PC-9 (cell line): ENCODE measurements at regions of chr18 and their contacts with region 1.

Region 1: DNA sequence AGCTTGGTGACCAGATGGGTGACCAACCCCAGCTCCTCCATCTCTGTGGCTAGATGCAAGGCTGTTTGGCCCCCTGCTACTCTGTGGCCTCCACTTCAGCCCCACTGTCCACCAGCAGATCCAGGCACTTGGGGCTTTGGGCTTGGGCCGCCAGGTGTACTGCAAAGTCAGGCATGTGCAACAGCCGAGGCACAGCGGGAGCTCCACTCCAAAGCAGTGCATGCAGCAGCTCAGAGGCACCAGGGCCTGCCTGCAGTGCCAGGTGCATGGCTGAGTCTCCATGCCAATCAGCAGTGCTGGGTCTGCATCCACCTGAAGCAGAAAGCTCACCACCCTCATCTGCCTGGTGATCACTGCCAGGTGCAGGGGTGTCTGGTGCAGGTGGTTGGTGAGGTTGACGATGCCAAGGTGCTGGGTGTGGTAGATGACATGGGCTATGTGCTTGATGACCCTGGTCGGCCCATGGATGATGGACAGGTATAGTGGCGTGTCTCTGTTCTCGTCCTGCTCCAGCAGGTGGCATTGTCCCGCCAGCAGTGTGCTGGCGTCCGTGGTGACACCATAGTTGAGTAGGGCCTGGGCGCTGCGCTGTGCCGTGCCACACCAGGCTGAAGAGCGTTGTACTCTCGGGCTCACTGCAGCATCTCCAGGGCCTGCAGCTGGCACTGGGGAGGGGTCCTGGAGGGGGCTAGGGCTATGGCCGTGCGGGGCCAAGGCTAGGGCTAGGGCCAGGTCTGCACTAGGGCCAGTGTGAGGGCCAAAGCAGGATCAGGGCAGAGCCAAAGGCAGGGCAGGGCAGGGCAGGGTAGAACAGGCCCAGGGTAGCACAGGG is 1.0 kb upstream of the ANKRD62 start:
- DNase-seq: peak; percentile 41 to 73
- H3K4me3 ChIP-seq: no peak overlapping the region
- H3K27ac ChIP-seq: no peak overlapping the region
- H3K4me1 ChIP-seq: no peaks in the 10 kb centered on the region
- H3K27me3 ChIP-seq: no peaks in the 10 kb centered on the region
- CTCF ChIP-seq: peak; percentile 79

Region 2: GRCh38 chr18:12236934-12237832 is 144.6 kb after region 1 on chr18:
- CTCF ChIA-PET with region 1: no interaction called
- POLR2A ChIA-PET with region 1: no interaction called
- intact Hi-C with region 1: loop called (anchors 1 kb)
- DNase-seq: peak in 1 of 2 experiments; percentile 65
- H3K4me3 ChIP-seq: no peak overlapping the region
- H3K27ac ChIP-seq: no peak overlapping the region
- H3K4me1 ChIP-seq: peaks cover 15% of the 10 kb centered on the region
- H3K27me3 ChIP-seq: no peaks in the 10 kb centered on the region
- CTCF ChIP-seq: peak; percentile 90

Region 3: DNA sequence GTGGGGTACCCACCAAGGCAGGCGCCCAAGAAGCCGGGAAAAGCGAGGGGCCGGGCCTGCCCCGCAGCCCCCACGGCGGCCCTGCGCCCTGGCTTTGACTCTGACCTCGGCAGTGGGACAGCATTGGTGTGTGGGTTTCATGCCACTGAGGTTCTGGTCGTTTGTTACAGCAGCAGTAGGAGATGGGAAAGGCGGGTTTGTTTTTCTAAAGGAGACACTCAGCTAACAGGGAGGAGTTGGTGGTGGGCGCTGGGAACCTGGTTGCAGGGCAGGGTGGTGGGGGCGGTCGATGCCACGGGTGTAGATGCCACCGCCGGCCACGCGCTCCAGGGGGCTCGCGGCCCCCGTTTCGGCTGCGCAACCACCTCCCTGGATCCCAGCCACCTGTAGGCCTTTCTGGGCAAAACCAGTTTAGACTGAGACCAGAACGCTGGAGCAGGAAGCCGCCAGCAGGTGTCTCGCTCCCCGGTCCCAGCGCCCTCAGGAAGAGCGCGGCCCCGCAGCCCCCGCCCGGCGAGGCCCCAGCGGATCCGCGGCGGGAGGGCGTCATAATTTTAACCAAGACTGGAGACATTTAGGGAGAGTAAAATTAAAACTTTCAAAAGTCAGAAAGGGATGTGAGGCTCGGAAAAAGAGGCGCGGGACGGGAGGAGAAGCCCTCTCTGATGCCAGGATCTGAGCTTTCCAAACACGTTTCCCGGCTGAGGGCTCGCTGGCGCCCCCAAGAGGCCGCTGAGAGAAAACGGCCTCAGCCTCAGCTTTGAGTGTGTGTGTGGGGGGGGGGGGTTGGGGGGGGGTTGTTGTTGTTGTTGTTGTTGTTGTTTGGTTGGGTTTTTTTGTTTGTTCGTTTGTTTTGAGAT is 179.0 kb after region 1 on chr18:
- CTCF ChIA-PET with region 1: interaction called, 3 read pairs
- POLR2A ChIA-PET with region 1: no interaction called
- intact Hi-C with region 1: loop called (anchors 1 kb)
- DNase-seq: peak; percentile 60 to 83
- H3K4me3 ChIP-seq: peak overlapping the region; percentile 70
- H3K27ac ChIP-seq: peak overlapping the region; percentile 57
- H3K4me1 ChIP-seq: no peaks in the 10 kb centered on the region
- H3K27me3 ChIP-seq: no peaks in the 10 kb centered on the region
- CTCF ChIP-seq: peak; percentile 80

Region 4: DNA sequence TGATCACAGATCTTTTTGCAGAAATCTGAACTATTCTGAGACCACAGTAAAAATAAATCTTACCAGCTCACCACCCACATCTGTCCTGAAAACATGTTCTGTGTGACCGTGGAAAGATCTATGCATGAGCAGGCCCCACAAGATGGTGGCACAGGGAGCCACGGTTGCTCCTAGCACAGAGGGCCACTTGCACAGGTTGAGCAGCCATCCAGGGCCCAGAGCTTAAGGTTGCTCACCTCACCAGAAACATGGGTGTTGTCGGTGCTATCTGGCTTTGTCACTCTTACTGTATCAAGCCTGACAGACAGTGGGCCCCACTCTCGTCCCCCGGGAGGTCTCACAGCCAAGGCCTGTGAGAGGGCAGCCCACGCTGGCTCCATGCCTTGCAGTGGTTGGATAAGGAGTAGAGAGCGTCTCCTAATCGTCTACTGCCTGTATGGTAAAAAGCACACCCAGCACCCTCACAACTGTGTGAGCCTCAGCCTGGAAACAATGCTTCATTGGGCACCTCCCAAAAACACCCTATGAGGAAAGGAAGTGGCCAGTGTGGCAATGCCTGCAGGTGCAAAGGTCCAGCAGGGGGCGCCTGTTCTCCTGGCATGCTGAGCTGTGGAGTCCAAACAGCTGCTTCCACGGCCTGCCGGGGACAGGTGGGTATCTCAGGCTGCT is 235.0 kb after region 1 on chr18:
- CTCF ChIA-PET with region 1: no interaction called
- POLR2A ChIA-PET with region 1: interaction called, 5 read pairs
- intact Hi-C with region 1: loop called (anchors 1 kb)
- DNase-seq: peak; percentile 58 to 82
- H3K4me3 ChIP-seq: no peak overlapping the region
- H3K27ac ChIP-seq: no peak overlapping the region
- H3K4me1 ChIP-seq: no peaks in the 10 kb centered on the region
- H3K27me3 ChIP-seq: no peaks in the 10 kb centered on the region
- CTCF ChIP-seq: peak; percentile 91

Region 5: GRCh38 chr18:12336875-12337274 is 244.3 kb after region 1 on chr18:
- CTCF ChIA-PET with region 1: no interaction called
- POLR2A ChIA-PET with region 1: no interaction called
- intact Hi-C with region 1: loop called (anchors 2 kb)
- DNase-seq: peak; percentile 74 to 91
- H3K4me3 ChIP-seq: no peak overlapping the region; the same call in 1 of the 2 replicates
- H3K27ac ChIP-seq: peak overlapping the region; percentile 48
- H3K4me1 ChIP-seq: peaks cover 32% of the 10 kb centered on the region
- H3K27me3 ChIP-seq: no peaks in the 10 kb centered on the region
- CTCF ChIP-seq: no peak

Region 6: DNA sequence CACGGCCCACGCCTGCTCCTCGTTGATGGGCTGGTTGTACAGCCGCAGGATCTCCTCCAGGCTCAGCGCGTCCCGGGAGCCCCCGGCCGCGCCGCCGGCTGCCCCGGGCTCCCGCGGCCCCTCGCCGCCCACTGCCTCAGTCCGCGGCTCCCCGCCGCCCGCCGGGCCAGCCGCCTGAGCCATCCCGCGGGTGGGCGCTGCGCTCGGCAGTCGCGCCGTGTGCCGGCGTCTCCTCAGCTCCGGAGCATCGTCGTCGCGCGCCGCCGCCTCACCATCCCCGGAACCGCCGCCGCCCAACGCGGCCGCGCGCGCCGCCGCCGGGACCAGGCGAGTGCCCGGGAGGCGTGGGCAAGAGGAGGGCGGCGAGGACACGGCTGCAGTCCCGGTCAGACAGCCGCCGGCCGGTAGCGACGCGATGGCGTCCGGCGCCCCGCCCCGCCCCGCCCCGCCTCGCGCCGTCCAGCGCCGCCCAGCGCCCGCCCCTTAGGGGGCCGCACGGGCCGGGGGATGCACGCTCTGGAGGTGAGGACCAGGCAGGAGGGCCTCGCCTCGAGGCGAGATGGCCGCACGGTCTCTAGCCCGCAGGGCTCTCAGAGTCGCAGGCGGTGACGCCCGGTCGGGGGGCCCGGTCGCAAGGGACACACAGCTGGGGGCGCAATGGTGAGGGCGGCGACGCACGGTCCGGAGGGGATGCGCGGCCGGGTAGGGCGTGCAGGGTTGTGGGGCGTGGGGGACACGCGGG is 565.2 kb after region 1 on chr18 and contains the start of gene SPIRE1:
- CTCF ChIA-PET with region 1: no interaction called
- POLR2A ChIA-PET with region 1: no interaction called
- intact Hi-C with region 1: loop called (anchors 2 kb)
- DNase-seq: peak in 1 of 2 experiments; percentile 79
- H3K4me3 ChIP-seq: peak within 1 kb of the TSS; percentile 86
- H3K27ac ChIP-seq: no peak within 1 kb of the TSS
- H3K4me1 ChIP-seq: peaks cover 29% of the 10 kb centered on the region
- H3K27me3 ChIP-seq: no peaks in the 10 kb centered on the region
- CTCF ChIP-seq: no peak
- total RNA-seq, gene SPIRE1: 26.1 and 36.4 TPM in 2 replicates